ENCODE measurements at regions of chr4 and their contacts with region 1.

Region 1: DNA sequence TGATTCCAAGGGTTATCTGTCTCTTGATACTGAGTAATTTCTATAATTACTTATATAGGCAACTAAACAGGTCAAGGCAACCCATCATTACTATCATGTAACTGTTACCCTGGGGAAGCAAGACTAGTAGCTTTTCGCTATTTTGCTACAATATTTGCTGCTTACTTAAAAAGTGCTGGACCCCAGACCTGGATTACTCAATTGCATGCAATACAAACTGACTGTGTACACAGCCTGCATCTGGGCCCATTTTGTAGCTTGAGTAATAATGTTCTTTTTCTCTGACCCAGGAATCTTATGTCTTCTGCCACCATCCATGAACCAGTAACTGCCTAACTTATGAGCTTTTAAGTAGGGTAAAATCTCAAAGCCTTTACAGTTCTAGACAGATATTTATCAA is 53.4 kb downstream of the CNOT6L start:
- DNase-seq: no peak
- ATAC-seq: no peak
- H3K4me3 ChIP-seq: no peak overlapping the region
- H3K4me3 Mint-ChIP-seq: no peak overlapping the region
- H3K27ac ChIP-seq: no peak overlapping the region
- H3K27ac Mint-ChIP-seq: peak overlapping the region in 1 of 2 donors; percentile 52
- H3K4me1 ChIP-seq: no peaks in the 10 kb centered on the region
- H3K4me1 Mint-ChIP-seq: peaks cover 39 to 46% (median 44%) of the 10 kb centered on the region in 3 donors
- H3K27me3 ChIP-seq: no peaks in the 10 kb centered on the region
- H3K27me3 Mint-ChIP-seq: no peaks in the 10 kb centered on the region

Region 2: DNA sequence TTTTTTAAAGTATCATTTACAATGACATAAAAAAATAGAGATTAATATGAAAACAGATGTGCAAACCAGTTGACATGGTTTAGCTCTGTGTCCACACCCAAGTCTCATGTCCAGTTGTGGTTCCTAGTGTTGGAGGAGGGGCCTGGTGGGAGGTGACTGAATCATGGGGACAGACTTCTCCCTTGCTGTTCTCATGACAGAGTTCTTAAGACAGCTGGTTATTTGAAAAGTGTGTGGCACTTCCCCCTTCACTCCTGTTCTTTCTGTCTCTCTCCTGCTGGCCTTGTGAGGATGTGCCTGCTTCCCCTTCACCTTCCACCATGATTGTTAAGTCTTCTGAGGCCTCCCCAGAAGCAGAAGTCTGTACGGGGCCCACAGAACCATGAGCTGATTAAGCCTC is 29.6 kb after region 1 on chr4:
- CTCF ChIA-PET with region 1: no interaction called
- POLR2A ChIA-PET with region 1: interaction called, 4 to 10 read pairs
- DNase-seq: no peak
- ATAC-seq: no peak
- H3K4me3 ChIP-seq: no peak overlapping the region
- H3K4me3 Mint-ChIP-seq: peak overlapping the region in 1 of 3 donors; percentile 71
- H3K27ac ChIP-seq: no peak overlapping the region
- H3K27ac Mint-ChIP-seq: peak overlapping the region in 1 of 2 donors; percentile 53
- H3K4me1 ChIP-seq: peaks cover 32 to 58% of the 10 kb centered on the region in 2 experiments
- H3K4me1 Mint-ChIP-seq: peaks cover 80 to 87% (median 84%) of the 10 kb centered on the region in 3 donors
- H3K27me3 ChIP-seq: no peaks in the 10 kb centered on the region
- H3K27me3 Mint-ChIP-seq: no peaks in the 10 kb centered on the region

Region 3: GRCh38 chr4:77800483-77801259 is 35.0 kb after region 1 on chr4:
- CTCF ChIA-PET with region 1: no interaction called
- POLR2A ChIA-PET with region 1: interaction called, 9 to 12 read pairs
- DNase-seq: no peak
- ATAC-seq: peak; percentile 13 to 55 (median 44)
- H3K4me3 ChIP-seq: peak overlapping the region; percentile 19 to 25
- H3K4me3 Mint-ChIP-seq: peak overlapping the region; percentile 58 to 73 (median 60)
- H3K27ac ChIP-seq: peak overlapping the region; percentile 70
- H3K27ac Mint-ChIP-seq: peak overlapping the region; percentile 63 to 85
- H3K4me1 ChIP-seq: peaks cover 40 to 48% of the 10 kb centered on the region in 2 experiments
- H3K4me1 Mint-ChIP-seq: peaks cover 88 to 91% (median 90%) of the 10 kb centered on the region in 3 donors
- H3K27me3 ChIP-seq: no peaks in the 10 kb centered on the region
- H3K27me3 Mint-ChIP-seq: no peaks in the 10 kb centered on the region

Region 4: DNA sequence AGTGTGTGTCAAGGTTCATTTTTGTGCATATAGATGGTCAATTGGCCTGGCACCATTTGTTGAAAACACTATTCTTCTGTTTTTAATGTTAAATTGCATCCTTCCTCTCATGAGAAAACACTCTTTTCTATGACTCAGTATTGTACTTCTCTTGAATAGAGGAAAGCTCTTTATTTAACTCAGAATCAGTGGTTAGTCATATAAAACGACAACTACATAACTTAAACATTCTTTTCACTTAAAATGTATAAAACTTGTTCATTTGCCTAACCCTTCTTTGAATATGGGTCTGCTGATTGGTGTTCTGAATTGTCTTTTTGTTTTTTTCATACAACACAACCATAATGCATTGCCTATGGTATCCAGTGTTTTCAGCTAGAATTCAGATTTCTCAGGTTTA is 79.7 kb after region 1 on chr4:
- CTCF ChIA-PET with region 1: no interaction called
- POLR2A ChIA-PET with region 1: interaction called in 1 of 2 experiments, 11 read pairs
- DNase-seq: no peak
- ATAC-seq: no peak
- H3K4me3 ChIP-seq: no peak overlapping the region
- H3K4me3 Mint-ChIP-seq: no peak overlapping the region
- H3K27ac ChIP-seq: no peak overlapping the region
- H3K27ac Mint-ChIP-seq: no peak overlapping the region
- H3K4me1 ChIP-seq: peaks cover 0 to 5% of the 10 kb centered on the region in 2 experiments
- H3K4me1 Mint-ChIP-seq: peaks cover 7 to 11% (median 9%) of the 10 kb centered on the region in 3 donors
- H3K27me3 ChIP-seq: no peaks in the 10 kb centered on the region
- H3K27me3 Mint-ChIP-seq: no peaks in the 10 kb centered on the region

Region 5: GRCh38 chr4:79013756-79014155 is 1248.0 kb after region 1 on chr4:
- CTCF ChIA-PET with region 1: no interaction called
- POLR2A ChIA-PET with region 1: no interaction called
- DNase-seq: no peak
- ATAC-seq: no peak
- H3K4me3 ChIP-seq: no peak overlapping the region
- H3K4me3 Mint-ChIP-seq: no peak overlapping the region
- H3K27ac ChIP-seq: no peak overlapping the region
- H3K27ac Mint-ChIP-seq: no peak overlapping the region
- H3K4me1 ChIP-seq: no peaks in the 10 kb centered on the region
- H3K4me1 Mint-ChIP-seq: no peaks in the 10 kb centered on the region
- H3K27me3 ChIP-seq: no peaks in the 10 kb centered on the region
- H3K27me3 Mint-ChIP-seq: peaks cover 4 to 17% of the 10 kb centered on the region in 2 donors

Measured in T-cell (primary cell).